Prostate gland (tissue), 2 donors: ENCODE measurements at regions of chr14 and their contacts with region 1.

Region 1: DNA sequence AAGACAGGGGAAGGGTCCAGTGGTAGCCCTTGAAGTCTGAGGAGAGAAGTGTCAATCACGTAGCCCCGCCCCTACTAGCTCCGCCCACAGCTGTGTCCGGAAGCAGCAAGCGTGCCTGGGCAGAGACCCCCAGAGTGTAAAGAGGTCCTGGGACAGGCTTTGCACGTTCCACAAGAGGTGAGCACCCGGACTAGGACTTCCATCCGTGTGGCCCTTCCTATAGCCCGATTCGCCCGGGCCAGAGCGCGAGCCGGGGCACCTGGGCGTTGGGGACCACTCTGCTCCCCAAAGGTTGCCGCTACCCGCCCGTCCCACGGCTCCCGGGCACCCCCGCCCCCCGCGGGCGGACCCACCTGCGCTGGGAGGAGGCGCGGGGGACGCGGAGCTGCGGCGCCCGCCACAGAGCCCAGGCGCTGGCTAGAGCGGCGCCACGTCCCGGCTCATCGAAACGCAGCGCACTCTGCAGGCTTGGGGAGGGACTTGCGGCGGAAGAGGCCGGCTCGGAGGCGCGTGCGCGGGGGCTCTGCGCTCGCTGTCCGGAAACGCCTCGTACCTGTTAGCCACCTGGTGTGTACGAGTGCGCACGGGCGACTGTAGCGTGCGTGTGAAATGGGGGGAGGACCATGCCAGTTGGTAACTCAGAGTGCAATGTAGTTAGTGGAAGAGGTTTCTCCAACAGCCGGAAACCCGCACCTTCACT is at the start of gene RABGGTA:
- DNase-seq: peak; percentile 83
- H3K4me3 ChIP-seq: peak within 1 kb of the TSS; percentile 74 to 99
- H3K27ac ChIP-seq: peak within 1 kb of the TSS; percentile 87 to 96
- H3K4me1 ChIP-seq: no peaks in the 10 kb centered on the region
- H3K27me3 ChIP-seq: no peaks in the 10 kb centered on the region
- CTCF ChIP-seq: peak; percentile 25 to 89 (median 78)
- POLR2A ChIP-seq: peak; percentile 70
- total RNA-seq, gene RABGGTA: 45.5 to 63.5 TPM

Region 2: DNA sequence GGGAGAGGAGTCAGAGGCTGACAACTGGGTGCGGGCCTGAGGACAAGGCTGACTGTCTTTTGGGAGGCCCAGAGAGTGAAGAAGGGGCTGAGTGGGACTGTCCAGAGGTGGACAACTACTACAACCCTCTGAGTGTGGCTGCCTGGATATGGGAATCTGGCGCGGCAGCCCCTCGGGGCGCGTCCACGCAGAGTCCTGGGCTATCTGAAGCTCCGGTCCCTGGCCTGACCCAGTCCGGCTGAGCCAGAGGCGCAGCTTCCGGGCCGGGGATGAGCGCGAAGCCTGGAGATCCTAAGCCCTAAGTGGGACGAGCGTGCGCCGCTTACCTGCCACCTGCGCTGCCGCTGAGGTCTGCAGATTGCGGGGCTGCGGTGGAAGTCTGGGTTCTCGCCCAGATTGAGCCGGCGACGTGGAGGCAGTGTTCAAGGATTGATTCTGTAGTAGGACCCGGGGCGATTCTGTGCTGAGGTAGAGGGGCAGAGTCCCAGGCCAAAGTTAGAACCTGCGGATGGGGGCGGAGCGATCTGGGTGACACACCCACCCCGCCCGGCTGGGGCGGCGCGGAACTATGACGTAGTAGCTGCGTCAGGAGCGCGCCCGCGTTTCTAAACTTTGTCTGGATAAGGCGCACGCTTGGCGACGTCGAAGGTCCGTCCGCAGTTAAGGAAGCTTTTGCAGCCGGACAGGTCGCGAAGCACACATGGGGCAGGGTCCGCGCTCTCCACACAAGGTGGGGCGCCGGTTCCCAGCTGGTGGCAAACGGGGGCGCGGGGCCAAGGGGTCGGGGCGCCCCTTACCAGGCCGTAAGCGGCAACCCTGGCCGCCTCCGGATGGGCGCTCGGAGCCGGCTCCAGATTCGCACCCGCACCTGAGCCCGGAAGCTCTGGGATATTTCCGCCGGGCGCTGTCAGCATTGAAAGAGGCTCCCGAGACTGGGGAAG is 28.2 kb after region 1 on chr14 and contains the starts of genes DHRS1 and NOP9:
- intact Hi-C with region 1: loop called (anchors 1 kb)
- DNase-seq: peak; percentile 92
- H3K4me3 ChIP-seq: peak within 1 kb of the TSS; percentile 66 to 69
- H3K27ac ChIP-seq: peak within 1 kb of the TSS; percentile 76 to 82
- H3K4me1 ChIP-seq: peaks cover 14% of the 10 kb centered on the region
- H3K27me3 ChIP-seq: no peaks in the 10 kb centered on the region
- CTCF ChIP-seq: peak in 1 of 4 experiments; percentile 30
- POLR2A ChIP-seq: peak; percentile 86
- total RNA-seq, gene DHRS1: 16.9 to 74.0 TPM
- total RNA-seq, gene NOP9: 21.2 to 22.9 TPM